Activated CD8-positive, alpha-beta memory T cell treated with anti-CD3 and anti-CD28 coated beads, Interleukin-2, amount 10 ng/mL, durations not matched to agents 7 days and 5 days (primary cell): ENCODE measurements at regions of chr3 and their contacts with region 1.

Region 1: DNA sequence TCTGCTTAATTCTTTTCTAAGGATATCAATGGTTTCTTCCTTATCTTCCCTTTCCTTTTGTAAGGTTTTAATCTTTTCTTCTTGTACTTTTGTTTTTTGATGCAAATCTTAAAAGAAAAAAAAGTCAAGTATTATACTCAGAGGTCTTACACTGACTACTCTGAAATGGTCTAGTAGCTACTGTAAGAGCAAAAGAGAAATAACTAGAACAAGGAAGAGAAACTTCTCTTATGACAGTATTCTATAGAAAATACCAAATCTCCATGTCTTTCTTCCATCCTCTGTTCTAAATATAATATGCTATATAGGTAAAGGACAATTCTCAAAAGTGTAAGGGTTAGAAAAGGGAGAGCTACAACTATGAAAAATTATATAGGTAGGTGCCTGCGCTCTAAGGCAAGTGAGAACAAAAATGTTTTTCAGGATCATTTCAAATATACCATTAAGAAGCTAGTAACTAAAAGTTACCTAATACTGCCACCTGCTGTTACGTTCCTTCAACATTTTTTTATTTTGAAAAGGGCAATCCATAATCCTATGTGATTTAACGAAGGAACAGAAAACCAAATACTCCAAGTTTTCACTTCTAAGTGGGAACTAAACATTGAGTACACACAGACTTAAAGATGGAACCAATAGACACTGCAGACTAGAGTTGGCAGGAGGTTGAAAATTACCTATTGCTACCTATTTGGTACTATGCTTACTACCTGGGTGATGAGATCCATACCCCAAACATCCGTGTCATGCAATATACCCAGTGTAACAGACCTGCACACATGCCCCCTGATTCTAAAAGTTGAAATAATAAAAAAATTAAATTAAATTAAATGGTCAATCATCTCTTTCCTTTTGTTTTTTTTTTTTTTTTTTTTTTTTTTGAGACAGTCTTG is 36.7 kb downstream of the CIP2A start:
- DNase-seq: no peak
- ATAC-seq: no peak
- H3K4me3 Mint-ChIP-seq: no peak overlapping the region
- H3K27ac Mint-ChIP-seq: peak overlapping the region; percentile 36
- H3K4me1 Mint-ChIP-seq: peaks cover 5% of the 10 kb centered on the region
- H3K27me3 Mint-ChIP-seq: no peaks in the 10 kb centered on the region

Region 2: GRCh38 chr3:108489771-108490170 is 62.7 kb before region 1 on chr3:
- CTCF ChIA-PET with region 1: interaction called, 21 read pairs
- DNase-seq: peak; percentile 53
- ATAC-seq: peak; percentile 82
- H3K4me3 Mint-ChIP-seq: no peak overlapping the region
- H3K27ac Mint-ChIP-seq: no peak overlapping the region
- H3K4me1 Mint-ChIP-seq: peaks cover 4% of the 10 kb centered on the region
- H3K27me3 Mint-ChIP-seq: peaks cover 12% of the 10 kb centered on the region

Region 3: GRCh38 chr3:108527109-108527508 is 25.4 kb before region 1 on chr3:
- CTCF ChIA-PET with region 1: no interaction called
- DNase-seq: no peak
- ATAC-seq: no peak
- H3K4me3 Mint-ChIP-seq: no peak overlapping the region
- H3K27ac Mint-ChIP-seq: no peak overlapping the region
- H3K4me1 Mint-ChIP-seq: no peaks in the 10 kb centered on the region
- H3K27me3 Mint-ChIP-seq: peaks cover 18% of the 10 kb centered on the region

Region 4: GRCh38 chr3:108538083-108538482 is 14.4 kb before region 1 on chr3:
- CTCF ChIA-PET with region 1: interaction called, 12 read pairs
- DNase-seq: no peak
- ATAC-seq: no peak
- H3K4me3 Mint-ChIP-seq: no peak overlapping the region
- H3K27ac Mint-ChIP-seq: no peak overlapping the region
- H3K4me1 Mint-ChIP-seq: no peaks in the 10 kb centered on the region
- H3K27me3 Mint-ChIP-seq: no peaks in the 10 kb centered on the region